A673 (cell line): ENCODE measurements at regions of chr2 and their contacts with region 1.

Region 1: DNA sequence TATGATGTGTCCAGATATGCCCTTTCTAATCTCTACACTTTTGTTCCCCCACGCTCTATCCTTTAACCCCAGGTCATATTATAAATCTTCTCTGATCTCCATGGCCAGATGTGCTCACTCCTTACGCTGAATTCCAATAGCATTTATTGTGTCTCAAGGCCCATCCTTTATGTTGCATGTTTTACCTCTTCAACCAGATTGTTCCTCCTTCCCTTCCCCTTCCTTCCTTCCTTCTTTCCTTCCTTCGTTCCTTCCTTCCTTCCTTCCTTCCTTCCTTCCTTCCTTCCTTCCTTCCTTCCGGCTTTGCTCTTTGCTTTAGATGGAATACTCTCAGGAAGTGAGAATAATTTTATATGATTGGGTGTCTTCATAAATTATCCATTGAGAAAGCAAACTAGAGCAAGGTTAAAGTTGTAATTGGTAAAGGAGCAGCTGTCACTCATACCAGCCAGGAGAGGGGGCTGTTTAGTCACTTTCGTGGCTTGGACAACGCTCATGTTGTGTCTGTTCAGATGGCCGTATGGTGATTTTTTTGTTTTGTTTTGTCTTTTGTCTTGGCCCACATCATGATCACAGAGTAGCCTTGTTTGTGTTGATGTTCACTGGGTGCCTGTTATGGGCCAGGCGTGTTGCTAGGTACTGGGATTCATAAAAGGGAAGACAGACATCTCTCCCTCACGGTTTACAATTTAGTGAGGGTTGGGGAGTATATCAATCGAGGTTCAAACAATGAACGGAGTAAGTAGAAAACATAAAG is 68.0 kb downstream of the DAW1 start:
- DNase-seq: peak; percentile 95
- H3K4me3 ChIP-seq: no peak overlapping the region
- H3K27ac ChIP-seq: peak overlapping the region; percentile 97
- H3K4me1 ChIP-seq: peaks cover 39% of the 10 kb centered on the region
- H3K27me3 ChIP-seq: no peaks in the 10 kb centered on the region
- CTCF ChIP-seq: peak; percentile 90

Region 2: GRCh38 chr2:227406177-227407031 is 533.0 kb before region 1 on chr2:
- CTCF ChIA-PET with region 1: no interaction called
- POLR2A ChIA-PET with region 1: no interaction called
- intact Hi-C with region 1: loop called (anchors 2 kb)
- DNase-seq: peak; percentile 99
- H3K4me3 ChIP-seq: no peak overlapping the region
- H3K27ac ChIP-seq: peak overlapping the region; percentile 95
- H3K4me1 ChIP-seq: peaks cover 30% of the 10 kb centered on the region
- H3K27me3 ChIP-seq: no peaks in the 10 kb centered on the region
- CTCF ChIP-seq: peak; percentile 89

Region 3: GRCh38 chr2:227728035-227728434 is 211.4 kb before region 1 on chr2 and contains the start of gene SCYGR7:
- CTCF ChIA-PET with region 1: no interaction called
- POLR2A ChIA-PET with region 1: no interaction called
- intact Hi-C with region 1: no loop called
- DNase-seq: no peak
- H3K4me3 ChIP-seq: no peak within 1 kb of the TSS
- H3K27ac ChIP-seq: no peak within 1 kb of the TSS
- H3K4me1 ChIP-seq: no peaks in the 10 kb centered on the region
- H3K27me3 ChIP-seq: no peaks in the 10 kb centered on the region
- CTCF ChIP-seq: no peak
- total RNA-seq, gene SCYGR7: not detected in 2 replicates

Region 4: GRCh38 chr2:227862227-227862740 is 77.2 kb before region 1 on chr2:
- CTCF ChIA-PET with region 1: no interaction called
- POLR2A ChIA-PET with region 1: no interaction called
- intact Hi-C with region 1: no loop called
- DNase-seq: peak; percentile 67
- H3K4me3 ChIP-seq: no peak overlapping the region
- H3K27ac ChIP-seq: no peak overlapping the region
- H3K4me1 ChIP-seq: peaks cover 22% of the 10 kb centered on the region
- H3K27me3 ChIP-seq: no peaks in the 10 kb centered on the region
- CTCF ChIP-seq: peak; percentile 85

Region 5: DNA sequence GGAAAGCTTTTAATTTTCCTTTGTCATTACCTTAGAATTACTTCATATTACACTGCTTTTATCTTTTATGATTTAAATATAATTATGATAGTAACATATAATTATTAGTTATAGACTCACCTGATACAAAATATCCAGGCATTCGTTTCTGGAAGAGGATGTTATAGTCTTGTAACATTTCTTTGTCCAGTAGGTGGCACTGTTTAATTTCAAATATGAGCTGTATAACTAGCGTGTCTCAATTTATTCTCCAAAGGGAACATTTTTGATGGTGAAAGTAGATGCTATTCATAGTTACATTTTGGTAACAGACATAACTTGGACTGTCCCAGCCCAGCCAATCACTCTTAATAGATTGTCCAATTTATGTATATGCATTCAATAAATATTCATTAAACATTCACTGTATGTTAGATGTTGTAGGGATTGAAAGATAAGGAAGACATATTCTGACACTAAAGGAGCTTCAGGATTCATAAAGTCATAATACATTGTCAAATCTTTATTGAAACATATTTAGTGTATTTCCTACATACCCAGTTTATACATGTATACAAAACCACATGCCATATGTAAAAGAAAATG is 48.9 kb before region 1 on chr2:
- CTCF ChIA-PET with region 1: interaction called, 5 read pairs
- POLR2A ChIA-PET with region 1: no interaction called
- intact Hi-C with region 1: loop called (anchors 2 kb)
- DNase-seq: peak; percentile 83
- H3K4me3 ChIP-seq: no peak overlapping the region
- H3K27ac ChIP-seq: peak overlapping the region; percentile 62
- H3K4me1 ChIP-seq: peaks cover 12% of the 10 kb centered on the region
- H3K27me3 ChIP-seq: no peaks in the 10 kb centered on the region
- CTCF ChIP-seq: peak; percentile 68

Region 6: DNA sequence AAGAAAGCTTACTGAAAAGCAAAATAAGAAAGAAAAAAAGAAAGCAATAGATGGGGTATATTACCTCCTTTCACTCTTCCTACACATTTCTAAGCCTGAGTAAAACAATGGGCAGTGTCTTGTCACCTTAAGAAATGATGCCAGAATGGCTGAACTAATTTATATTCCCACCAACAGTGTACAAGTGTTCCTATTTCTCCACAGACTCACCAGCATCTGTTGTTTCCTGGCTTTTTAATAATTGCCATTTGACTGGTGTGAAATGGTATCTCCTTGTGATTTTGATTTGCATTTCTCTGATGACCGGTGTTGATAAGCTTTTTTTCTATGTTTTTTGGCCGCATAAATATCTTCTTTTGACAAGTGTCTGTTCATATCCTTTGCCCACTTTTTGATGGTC is 143.7 kb after region 1 on chr2:
- CTCF ChIA-PET with region 1: no interaction called
- POLR2A ChIA-PET with region 1: no interaction called
- intact Hi-C with region 1: loop called (anchors 1 kb)
- DNase-seq: peak; percentile 25
- H3K4me3 ChIP-seq: no peak overlapping the region
- H3K27ac ChIP-seq: peak overlapping the region; percentile 69
- H3K4me1 ChIP-seq: peaks cover 14% of the 10 kb centered on the region
- H3K27me3 ChIP-seq: no peaks in the 10 kb centered on the region
- CTCF ChIP-seq: no peak

Region 7: GRCh38 chr2:228318218-228318617 is 378.8 kb after region 1 on chr2:
- CTCF ChIA-PET with region 1: no interaction called
- POLR2A ChIA-PET with region 1: no interaction called
- intact Hi-C with region 1: loop called (anchors 10 kb)
- DNase-seq: peak; percentile 76
- H3K4me3 ChIP-seq: no peak overlapping the region
- H3K27ac ChIP-seq: no peak overlapping the region
- H3K4me1 ChIP-seq: peaks cover 14% of the 10 kb centered on the region
- H3K27me3 ChIP-seq: no peaks in the 10 kb centered on the region
- CTCF ChIP-seq: peak; percentile 71

Region 8: GRCh38 chr2:229273723-229274338 is 1334.4 kb after region 1 on chr2:
- CTCF ChIA-PET with region 1: no interaction called
- POLR2A ChIA-PET with region 1: no interaction called
- intact Hi-C with region 1: loop called (anchors 10 kb)
- DNase-seq: peak; percentile 90
- H3K4me3 ChIP-seq: peak overlapping the region; percentile 22
- H3K27ac ChIP-seq: no peak overlapping the region
- H3K4me1 ChIP-seq: peaks cover 5% of the 10 kb centered on the region
- H3K27me3 ChIP-seq: peaks cover 7% of the 10 kb centered on the region
- CTCF ChIP-seq: peak; percentile 85